ENCODE measurements at regions of chr4 and their contacts with region 1.

Region 1: GRCh38 chr4:16205298-16206164 is 20.7 kb downstream of the TAPT1 start:
- DNase-seq: no peak
- H3K4me3 ChIP-seq: no peak overlapping the region
- H3K27ac ChIP-seq: no peak overlapping the region
- H3K4me1 ChIP-seq: peaks cover 0 to 8% of the 10 kb centered on the region in 2 donors
- H3K27me3 ChIP-seq: no peaks in the 10 kb centered on the region
- CTCF ChIP-seq: peak; percentile 4 to 50 (median 48)

Region 2: GRCh38 chr4:15765910-15766697 is 439.4 kb before region 1 on chr4:
- intact Hi-C with region 1: no loop called
- DNase-seq: no peak
- H3K4me3 ChIP-seq: no peak overlapping the region
- H3K27ac ChIP-seq: no peak overlapping the region
- H3K4me1 ChIP-seq: no peaks in the 10 kb centered on the region
- H3K27me3 ChIP-seq: no peaks in the 10 kb centered on the region
- CTCF ChIP-seq: no peak

Region 3: GRCh38 chr4:16217300-16218051 is 11.9 kb after region 1 on chr4:
- intact Hi-C with region 1: loop called (anchors 2 kb)
- DNase-seq: no peak
- H3K4me3 ChIP-seq: no peak overlapping the region
- H3K27ac ChIP-seq: no peak overlapping the region
- H3K4me1 ChIP-seq: peaks cover 0 to 16% of the 10 kb centered on the region in 2 donors
- H3K27me3 ChIP-seq: no peaks in the 10 kb centered on the region
- CTCF ChIP-seq: no peak

Region 4: GRCh38 chr4:16237715-16238114 is 32.2 kb after region 1 on chr4:
- intact Hi-C with region 1: no loop called
- DNase-seq: no peak
- H3K4me3 ChIP-seq: no peak overlapping the region
- H3K27ac ChIP-seq: no peak overlapping the region
- H3K4me1 ChIP-seq: no peaks in the 10 kb centered on the region
- H3K27me3 ChIP-seq: no peaks in the 10 kb centered on the region
- CTCF ChIP-seq: no peak

Measured in ascending aorta (tissue), 2 donors.